Heart right ventricle (tissue), 16 donors: ENCODE measurements at regions of chr2 and their contacts with region 1.

Region 1: GRCh38 chr2:25131567-25132298 is 36.6 kb downstream of the POMC start:
- DNase-seq: peak; percentile 35 to 38
- ATAC-seq: peak in 7 of 8 donors; percentile 13 to 47 (median 34)
- H3K4me3 ChIP-seq: peak overlapping the region in 9 of 10 donors; percentile 14 to 49 (median 38)
- H3K27ac ChIP-seq: no peak overlapping the region
- H3K4me1 ChIP-seq: peaks cover 4 to 32% (median 14%) of the 10 kb centered on the region in 9 donors
- H3K27me3 ChIP-seq: peaks cover 0 to 43% (median 0%) of the 10 kb centered on the region in 7 donors
- CTCF ChIP-seq: no peak

Region 2: DNA sequence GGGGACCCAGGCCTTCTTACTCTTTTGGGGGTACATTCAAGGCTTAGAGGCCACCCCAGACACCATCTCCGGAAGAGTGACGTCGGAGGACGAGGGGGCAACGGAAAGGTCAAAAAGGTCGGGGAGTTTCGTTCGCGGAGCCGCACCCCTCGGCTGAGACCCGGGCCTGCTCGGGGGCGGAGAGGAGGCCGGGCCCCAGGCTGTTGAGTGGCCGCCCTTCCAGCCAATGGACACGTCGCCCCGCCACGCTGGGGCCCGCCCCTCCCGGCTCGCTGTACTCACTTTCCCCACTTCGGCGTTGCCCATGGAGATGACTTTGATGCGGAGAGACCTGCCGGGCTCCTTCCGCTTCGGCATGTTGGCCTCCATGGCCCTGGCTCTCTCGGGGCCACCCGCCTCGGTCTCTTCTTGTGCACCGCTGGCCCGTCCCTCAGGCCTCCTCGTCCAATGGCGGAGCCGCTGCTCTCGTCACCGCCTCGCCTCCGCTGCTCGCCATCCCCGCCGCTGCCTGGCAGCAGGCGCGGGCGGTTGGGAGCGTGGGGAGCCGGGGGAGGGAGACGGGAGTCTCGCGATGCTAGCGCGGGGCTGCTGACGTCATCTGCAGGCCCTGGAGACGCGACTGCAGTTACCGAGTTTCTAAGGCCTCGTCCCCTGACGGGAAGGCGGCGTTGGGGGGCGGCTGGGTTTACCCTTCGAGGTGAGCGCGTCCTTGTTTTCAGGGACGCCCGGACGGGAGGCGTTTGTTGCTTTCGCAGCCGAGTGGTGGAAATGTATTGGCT is 160.0 kb before region 1 on chr2 and contains the start of gene DNAJC27:
- intact Hi-C with region 1: loop called (anchors 1 to 5 kb)
- DNase-seq: peak; percentile 98 to 99
- ATAC-seq: peak; percentile 95 to 98 (median 97)
- H3K4me3 ChIP-seq: peak within 1 kb of the TSS; percentile 65 to 93 (median 78)
- H3K27ac ChIP-seq: peak within 1 kb of the TSS; percentile 95 to 100 (median 98)
- H3K4me1 ChIP-seq: peaks cover 0 to 35% (median 11%) of the 10 kb centered on the region in 9 donors
- H3K27me3 ChIP-seq: no peaks in the 10 kb centered on the region
- CTCF ChIP-seq: peak in 1 of 9 donors; percentile 8
- total RNA-seq, gene DNAJC27: 7.2 to 13.1 (median 10.5) TPM

Region 3: GRCh38 chr2:25035544-25036220 is 96.1 kb before region 1 on chr2:
- intact Hi-C with region 1: loop called in 4 of 10 experiments (anchors 5 to 10 kb)
- DNase-seq: no peak
- ATAC-seq: no peak
- H3K4me3 ChIP-seq: no peak overlapping the region
- H3K27ac ChIP-seq: no peak overlapping the region
- H3K4me1 ChIP-seq: peaks cover 0 to 13% (median 0%) of the 10 kb centered on the region in 9 donors
- H3K27me3 ChIP-seq: peaks cover 0 to under 1% (median 0%) of the 10 kb centered on the region in 7 donors
- CTCF ChIP-seq: no peak

Region 4: GRCh38 chr2:25078171-25079049 is 53.3 kb before region 1 on chr2:
- intact Hi-C with region 1: loop called in 1 of 10 experiments (anchors 5 kb)
- DNase-seq: peak in 1 of 2 donors; percentile 35
- ATAC-seq: peak; percentile 56 to 91 (median 70)
- H3K4me3 ChIP-seq: peak overlapping the region in 1 of 10 donors; percentile 7
- H3K27ac ChIP-seq: peak overlapping the region in 9 of 10 donors; percentile 47 to 78 (median 64)
- H3K4me1 ChIP-seq: peaks cover 4 to 63% (median 37%) of the 10 kb centered on the region in 9 donors
- H3K27me3 ChIP-seq: no peaks in the 10 kb centered on the region
- CTCF ChIP-seq: no peak

Region 5: GRCh38 chr2:25197336-25198208 is 65.8 kb after region 1 on chr2:
- intact Hi-C with region 1: loop called in 1 of 10 experiments (anchors 2 kb)
- DNase-seq: no peak
- ATAC-seq: no peak
- H3K4me3 ChIP-seq: no peak overlapping the region
- H3K27ac ChIP-seq: no peak overlapping the region
- H3K4me1 ChIP-seq: peaks cover 0 to 9% (median 0%) of the 10 kb centered on the region in 9 donors
- H3K27me3 ChIP-seq: no peaks in the 10 kb centered on the region
- CTCF ChIP-seq: no peak

Region 6: GRCh38 chr2:25228848-25229278 is 97.1 kb after region 1 on chr2:
- intact Hi-C with region 1: no loop called
- DNase-seq: peak; percentile 74 to 81
- ATAC-seq: peak; percentile 74 to 91 (median 86)
- H3K4me3 ChIP-seq: no peak overlapping the region
- H3K27ac ChIP-seq: peak overlapping the region in 8 of 10 donors; percentile 10 to 58 (median 46)
- H3K4me1 ChIP-seq: peaks cover 6 to 30% (median 24%) of the 10 kb centered on the region in 9 donors
- H3K27me3 ChIP-seq: no peaks in the 10 kb centered on the region
- CTCF ChIP-seq: peak; percentile 47 to 80 (median 72)

Region 7: GRCh38 chr2:25252281-25253105 is 120.8 kb after region 1 on chr2:
- intact Hi-C with region 1: no loop called
- DNase-seq: peak; percentile 66 to 72
- ATAC-seq: peak; percentile 61 to 83 (median 74)
- H3K4me3 ChIP-seq: peak overlapping the region; percentile 22 to 71 (median 64)
- H3K27ac ChIP-seq: peak overlapping the region; percentile 18 to 90 (median 86)
- H3K4me1 ChIP-seq: peaks cover 16 to 40% (median 31%) of the 10 kb centered on the region in 9 donors
- H3K27me3 ChIP-seq: no peaks in the 10 kb centered on the region
- CTCF ChIP-seq: no peak